Activated CD8-positive, alpha-beta T cell treated with anti-CD3 and anti-CD28 coated beads for 36 hours (primary cell): ENCODE measurements at regions of chr17 and their contacts with region 1.

Region 1: GRCh38 chr17:49223517-49224197 is 6.9 kb downstream of the PHOSPHO1 start:
- DNase-seq: peak; percentile 85
- ATAC-seq: peak; percentile 26
- H3K4me3 Mint-ChIP-seq: peak overlapping the region; percentile 56
- H3K27ac Mint-ChIP-seq: peak overlapping the region; percentile 10
- H3K4me1 Mint-ChIP-seq: peaks cover 46% of the 10 kb centered on the region
- H3K27me3 Mint-ChIP-seq: peaks cover 5% of the 10 kb centered on the region
- CTCF ChIP-seq: peak; percentile 95

Region 2: DNA sequence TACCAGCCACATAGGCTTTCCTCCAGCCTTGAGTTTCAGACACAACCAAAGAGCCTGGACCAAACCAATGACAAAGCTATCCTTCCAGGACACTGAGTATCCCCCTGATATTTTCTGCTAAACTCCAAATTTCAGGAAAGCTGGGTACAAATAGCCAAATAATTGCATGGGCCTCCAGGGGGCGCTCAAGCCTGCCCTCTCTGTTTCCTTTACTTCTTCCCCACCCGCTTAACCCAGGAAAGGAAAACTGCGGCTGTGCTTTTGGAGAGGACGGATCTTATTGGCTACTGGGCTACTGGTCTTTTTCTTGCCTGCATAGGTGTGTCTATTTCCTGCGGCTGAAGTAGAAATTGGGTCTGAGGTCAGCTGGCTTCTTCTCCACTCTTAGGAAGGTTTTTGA is 43.4 kb before region 1 on chr17:
- CTCF ChIA-PET with region 1: interaction called, 210 read pairs
- POLR2A ChIA-PET with region 1: interaction called, 20 read pairs
- intact Hi-C with region 1: loop called (anchors 2 kb)
- DNase-seq: peak; percentile 82
- ATAC-seq: peak; percentile 37
- H3K4me3 Mint-ChIP-seq: no peak overlapping the region
- H3K27ac Mint-ChIP-seq: no peak overlapping the region
- H3K4me1 Mint-ChIP-seq: peaks cover 4% of the 10 kb centered on the region
- H3K27me3 Mint-ChIP-seq: no peaks in the 10 kb centered on the region
- CTCF ChIP-seq: peak; percentile 99

Region 3: GRCh38 chr17:49201481-49201927 is 22.2 kb before region 1 on chr17:
- CTCF ChIA-PET with region 1: interaction called, 126 read pairs
- POLR2A ChIA-PET with region 1: interaction called, 30 read pairs
- intact Hi-C with region 1: no loop called
- DNase-seq: no peak
- ATAC-seq: no peak
- H3K4me3 Mint-ChIP-seq: no peak overlapping the region
- H3K27ac Mint-ChIP-seq: no peak overlapping the region
- H3K4me1 Mint-ChIP-seq: no peaks in the 10 kb centered on the region
- H3K27me3 Mint-ChIP-seq: no peaks in the 10 kb centered on the region
- CTCF ChIP-seq: no peak

Region 4: GRCh38 chr17:49210158-49211029 is 13.3 kb before region 1 on chr17 and contains the starts of genes ABI3 and GNGT2:
- CTCF ChIA-PET with region 1: interaction called, 15 read pairs
- POLR2A ChIA-PET with region 1: interaction called, 26 read pairs
- intact Hi-C with region 1: no loop called
- DNase-seq: peak; percentile 85
- ATAC-seq: peak; percentile 88
- H3K4me3 Mint-ChIP-seq: peak within 1 kb of the TSS; percentile 79
- H3K27ac Mint-ChIP-seq: peak within 1 kb of the TSS; percentile 95
- H3K4me1 Mint-ChIP-seq: peaks cover 56% of the 10 kb centered on the region
- H3K27me3 Mint-ChIP-seq: no peaks in the 10 kb centered on the region
- CTCF ChIP-seq: no peak
- total RNA-seq, gene ABI3: 39.3 to 45.1 TPM
- total RNA-seq, gene GNGT2: 21.7 to 23.9 TPM

Region 5: DNA sequence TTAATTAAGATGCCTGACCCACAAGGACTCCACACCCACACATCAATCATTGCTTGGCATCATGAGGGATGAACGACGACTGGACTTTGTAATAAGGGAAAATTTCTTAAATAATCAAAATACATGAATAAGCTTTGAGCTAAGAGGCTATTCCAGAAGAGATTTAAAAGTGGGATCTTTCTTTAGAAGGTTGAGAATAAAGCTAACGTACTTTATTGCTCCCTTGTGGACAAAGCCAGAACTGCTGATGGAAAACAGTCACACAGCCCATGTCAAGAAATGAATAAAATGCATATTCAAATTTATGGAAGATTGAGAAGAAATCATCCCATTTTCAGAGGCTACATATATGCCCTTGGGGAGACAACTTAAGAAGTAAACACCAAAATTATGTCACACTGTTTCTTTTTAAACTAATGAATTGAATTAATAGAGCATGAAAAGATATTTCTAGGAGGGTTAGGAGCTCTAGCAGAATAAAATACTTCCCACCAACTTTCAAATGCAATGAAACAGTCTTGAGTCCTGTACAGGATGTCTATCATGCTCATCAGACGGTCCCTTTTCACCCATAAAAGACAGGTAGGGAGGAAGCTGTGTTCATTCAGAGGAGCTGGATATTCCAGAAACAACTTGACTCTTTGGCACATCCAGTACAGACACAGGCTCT is 67.2 kb after region 1 on chr17:
- CTCF ChIA-PET with region 1: interaction called, 21 read pairs
- POLR2A ChIA-PET with region 1: no interaction called
- intact Hi-C with region 1: no loop called
- DNase-seq: peak; percentile 39
- ATAC-seq: peak; percentile 45
- H3K4me3 Mint-ChIP-seq: no peak overlapping the region
- H3K27ac Mint-ChIP-seq: no peak overlapping the region
- H3K4me1 Mint-ChIP-seq: peaks cover 6% of the 10 kb centered on the region
- H3K27me3 Mint-ChIP-seq: no peaks in the 10 kb centered on the region
- CTCF ChIP-seq: peak; percentile 83